ENCODE measurements at regions of chr11 and their contacts with region 1.

Region 1: DNA sequence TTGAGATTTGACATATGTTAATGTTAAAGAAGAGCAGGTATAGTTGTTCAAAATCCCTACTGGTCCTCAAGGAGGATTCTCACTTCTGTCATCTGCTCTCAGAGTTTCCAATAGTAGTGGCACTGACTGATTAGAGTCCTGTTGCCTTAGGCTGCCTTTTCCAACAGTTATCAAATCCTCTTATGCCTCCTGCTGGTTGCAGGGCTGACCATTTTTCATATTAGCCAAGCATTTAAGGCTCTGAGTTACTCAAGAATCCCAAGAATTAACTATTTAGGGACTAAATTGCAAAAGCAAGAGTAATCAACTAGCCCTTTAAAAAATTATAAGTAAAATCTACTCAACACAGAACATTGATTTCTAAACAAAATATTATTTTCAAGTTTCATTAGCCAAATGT is 212.0 kb upstream of the CHORDC1 start:
- DNase-seq: peak; percentile 71 to 74
- H3K4me3 ChIP-seq: no peak overlapping the region
- H3K4me3 Mint-ChIP-seq: no peak overlapping the region
- H3K27ac Mint-ChIP-seq: no peak overlapping the region
- H3K4me1 ChIP-seq: peaks cover 34% of the 10 kb centered on the region
- H3K4me1 Mint-ChIP-seq: peaks cover 32% of the 10 kb centered on the region
- H3K27me3 ChIP-seq: no peaks in the 10 kb centered on the region
- H3K27me3 Mint-ChIP-seq: no peaks in the 10 kb centered on the region
- CTCF ChIP-seq: peak; percentile 70 to 79

Region 2: DNA sequence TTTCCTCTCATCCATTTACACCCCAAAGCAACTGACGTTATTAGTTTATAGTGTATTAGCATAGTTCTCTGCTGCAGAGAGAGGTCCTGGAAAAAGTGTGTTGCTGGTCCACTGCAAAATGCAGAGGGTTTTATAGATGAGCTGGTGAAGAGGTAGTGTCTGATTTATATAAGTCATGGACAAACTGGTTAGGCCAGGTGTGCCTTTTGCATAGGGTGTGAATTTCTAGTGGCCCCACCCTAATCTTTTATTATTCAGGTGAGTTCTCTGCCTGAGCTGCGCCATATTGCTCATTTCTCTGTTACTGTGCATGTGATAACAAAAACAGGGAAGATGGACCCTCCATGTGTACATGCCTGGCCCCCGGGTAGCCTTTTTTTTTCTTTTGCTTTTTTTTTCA is 767.9 kb before region 1 on chr11:
- CTCF ChIA-PET with region 1: no interaction called
- POLR2A ChIA-PET with region 1: no interaction called
- intact Hi-C with region 1: loop called (anchors 10 kb)
- DNase-seq: no peak
- H3K4me3 ChIP-seq: no peak overlapping the region
- H3K4me3 Mint-ChIP-seq: no peak overlapping the region
- H3K27ac Mint-ChIP-seq: no peak overlapping the region
- H3K4me1 ChIP-seq: no peaks in the 10 kb centered on the region
- H3K4me1 Mint-ChIP-seq: no peaks in the 10 kb centered on the region
- H3K27me3 ChIP-seq: no peaks in the 10 kb centered on the region
- H3K27me3 Mint-ChIP-seq: peaks cover 2% of the 10 kb centered on the region
- CTCF ChIP-seq: no peak

Region 3: DNA sequence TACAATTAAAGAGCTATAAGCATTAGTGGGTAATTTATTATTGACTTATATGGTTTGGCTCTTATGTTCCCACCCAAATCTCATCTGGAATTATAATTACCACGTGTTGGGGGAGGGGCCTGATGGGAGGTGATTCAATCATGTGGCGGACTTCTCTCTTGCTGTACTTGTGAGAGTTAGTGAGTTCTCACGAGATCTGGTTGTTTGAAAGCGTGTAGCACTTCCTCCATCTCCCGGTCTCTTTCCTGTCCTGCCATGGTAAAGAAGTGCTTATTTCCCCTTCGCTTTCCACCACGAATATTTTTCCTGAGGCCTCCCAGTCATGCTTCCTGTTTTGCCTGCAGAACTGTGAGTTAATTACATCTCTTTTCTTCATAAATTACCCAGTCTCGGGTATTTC is 183.9 kb before region 1 on chr11:
- CTCF ChIA-PET with region 1: no interaction called
- POLR2A ChIA-PET with region 1: no interaction called
- intact Hi-C with region 1: loop called (anchors 1 kb)
- DNase-seq: no peak
- H3K4me3 ChIP-seq: no peak overlapping the region
- H3K4me3 Mint-ChIP-seq: no peak overlapping the region
- H3K27ac Mint-ChIP-seq: no peak overlapping the region
- H3K4me1 ChIP-seq: no peaks in the 10 kb centered on the region
- H3K4me1 Mint-ChIP-seq: no peaks in the 10 kb centered on the region
- H3K27me3 ChIP-seq: no peaks in the 10 kb centered on the region
- H3K27me3 Mint-ChIP-seq: peaks cover 8% of the 10 kb centered on the region
- CTCF ChIP-seq: no peak

Region 4: DNA sequence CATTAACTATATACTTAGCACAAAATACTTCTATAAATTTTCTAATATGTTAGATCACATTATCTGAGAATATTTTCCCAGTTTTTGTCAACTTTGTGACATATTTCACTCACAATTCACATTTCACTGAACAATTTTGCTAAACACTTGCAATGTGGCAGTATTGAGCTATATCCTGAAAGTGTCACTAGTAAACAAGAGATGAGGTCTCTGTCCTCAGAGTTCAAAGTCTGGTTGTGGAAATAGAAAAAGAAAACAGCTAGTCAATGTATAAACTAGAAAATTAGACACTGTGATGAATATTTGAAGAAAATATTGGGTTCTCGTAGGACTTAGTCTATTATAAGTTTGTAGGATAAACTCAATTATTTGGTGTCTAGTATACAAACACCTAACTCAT is 124.6 kb before region 1 on chr11:
- CTCF ChIA-PET with region 1: interaction called, 14 read pairs
- POLR2A ChIA-PET with region 1: no interaction called
- intact Hi-C with region 1: loop called (anchors 1 kb)
- DNase-seq: peak in 1 of 2 experiments; percentile 18
- H3K4me3 ChIP-seq: no peak overlapping the region
- H3K4me3 Mint-ChIP-seq: no peak overlapping the region
- H3K27ac Mint-ChIP-seq: no peak overlapping the region
- H3K4me1 ChIP-seq: peaks cover 15% of the 10 kb centered on the region
- H3K4me1 Mint-ChIP-seq: peaks cover 7% of the 10 kb centered on the region
- H3K27me3 ChIP-seq: no peaks in the 10 kb centered on the region
- H3K27me3 Mint-ChIP-seq: no peaks in the 10 kb centered on the region
- CTCF ChIP-seq: peak; percentile 36 to 46

Region 5: GRCh38 chr11:90380206-90380605 is 54.7 kb before region 1 on chr11:
- CTCF ChIA-PET with region 1: no interaction called
- POLR2A ChIA-PET with region 1: no interaction called
- intact Hi-C with region 1: no loop called
- DNase-seq: no peak
- H3K4me3 ChIP-seq: no peak overlapping the region
- H3K4me3 Mint-ChIP-seq: no peak overlapping the region
- H3K27ac Mint-ChIP-seq: no peak overlapping the region
- H3K4me1 ChIP-seq: no peaks in the 10 kb centered on the region
- H3K4me1 Mint-ChIP-seq: no peaks in the 10 kb centered on the region
- H3K27me3 ChIP-seq: no peaks in the 10 kb centered on the region
- H3K27me3 Mint-ChIP-seq: no peaks in the 10 kb centered on the region
- CTCF ChIP-seq: no peak

Region 6: GRCh38 chr11:90447618-90448017 is 12.8 kb after region 1 on chr11:
- CTCF ChIA-PET with region 1: interaction called, 3 read pairs
- POLR2A ChIA-PET with region 1: no interaction called
- intact Hi-C with region 1: loop called (anchors 1 kb)
- DNase-seq: no peak
- H3K4me3 ChIP-seq: no peak overlapping the region
- H3K4me3 Mint-ChIP-seq: no peak overlapping the region
- H3K27ac Mint-ChIP-seq: peak overlapping the region; percentile 64
- H3K4me1 ChIP-seq: peaks cover 52% of the 10 kb centered on the region
- H3K4me1 Mint-ChIP-seq: peaks cover 47% of the 10 kb centered on the region
- H3K27me3 ChIP-seq: no peaks in the 10 kb centered on the region
- H3K27me3 Mint-ChIP-seq: no peaks in the 10 kb centered on the region
- CTCF ChIP-seq: no peak